Activated CD4-positive, alpha-beta memory T cell treated with anti-CD3 and anti-CD28 coated beads for 36 hours (primary cell): ENCODE measurements at regions of chr15 and their contacts with region 1.

Region 1: GRCh38 chr15:40807028-40807887 is at the starts of genes DNAJC17 and ZFYVE19:
- DNase-seq: peak; percentile 97
- H3K4me3 Mint-ChIP-seq: peak within 1 kb of the TSS; percentile 97
- H3K27ac Mint-ChIP-seq: peak within 1 kb of the TSS; percentile 98
- H3K4me1 Mint-ChIP-seq: peaks cover 21% of the 10 kb centered on the region
- H3K27me3 Mint-ChIP-seq: no peaks in the 10 kb centered on the region
- total RNA-seq, gene DNAJC17: 32.5 to 34.5 TPM
- total RNA-seq, gene ZFYVE19: 22.8 to 26.1 TPM

Region 2: DNA sequence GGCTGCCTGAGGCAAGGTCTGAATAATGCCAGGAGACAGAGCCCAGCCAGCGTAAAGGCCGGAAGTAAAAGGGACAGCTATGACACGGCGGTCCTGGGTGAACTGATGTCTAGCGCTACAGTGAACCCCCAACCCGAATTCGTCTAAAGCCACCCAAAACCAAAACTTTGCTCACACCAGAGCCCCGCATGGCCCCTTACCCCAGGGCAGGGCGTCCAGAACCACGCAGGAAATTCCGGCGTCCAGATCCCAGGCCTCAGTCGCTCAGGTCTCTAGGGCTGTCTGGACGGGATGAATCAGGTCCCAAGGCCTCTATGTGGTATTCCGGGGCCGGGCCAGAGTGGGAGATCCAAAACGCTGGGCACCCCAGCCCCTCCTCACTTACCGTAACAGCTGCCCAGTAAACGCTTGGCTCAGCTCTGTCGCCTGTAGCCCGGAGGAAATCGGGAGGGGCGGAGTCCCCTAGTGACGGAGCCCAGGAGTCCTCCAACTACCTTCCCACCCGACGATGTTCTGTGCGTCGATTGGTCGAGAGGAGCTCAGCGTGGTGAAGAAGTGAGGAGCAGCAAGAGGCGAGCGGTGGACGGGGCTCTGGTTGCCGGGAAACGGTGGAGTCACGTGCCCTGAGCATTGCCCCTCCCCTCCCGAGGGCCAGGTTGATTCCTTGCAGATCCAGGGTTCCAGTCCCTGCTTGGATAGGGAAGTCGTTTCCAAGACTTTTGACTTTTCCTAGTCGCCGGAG is 242.5 kb before region 1 on chr15 and contains the start of gene CCDC32:
- CTCF ChIA-PET with region 1: no interaction called
- POLR2A ChIA-PET with region 1: no interaction called
- intact Hi-C with region 1: loop called (anchors 1 kb)
- DNase-seq: peak; percentile 98
- H3K4me3 Mint-ChIP-seq: peak within 1 kb of the TSS; percentile 96
- H3K27ac Mint-ChIP-seq: peak within 1 kb of the TSS; percentile 92
- H3K4me1 Mint-ChIP-seq: peaks cover 48% of the 10 kb centered on the region
- H3K27me3 Mint-ChIP-seq: peaks cover 2% of the 10 kb centered on the region
- total RNA-seq, gene CCDC32: 28.6 to 29.2 TPM

Region 3: GRCh38 chr15:40743921-40744814 is 63.1 kb before region 1 on chr15:
- CTCF ChIA-PET with region 1: interaction called, 3 read pairs
- POLR2A ChIA-PET with region 1: interaction called, 5 read pairs
- intact Hi-C with region 1: loop called (anchors 2 kb)
- DNase-seq: peak; percentile 86
- H3K4me3 Mint-ChIP-seq: peak overlapping the region; percentile 49
- H3K27ac Mint-ChIP-seq: peak overlapping the region; percentile 89
- H3K4me1 Mint-ChIP-seq: peaks cover 29% of the 10 kb centered on the region
- H3K27me3 Mint-ChIP-seq: no peaks in the 10 kb centered on the region

Region 4: GRCh38 chr15:40782580-40783227 is 24.6 kb before region 1 on chr15:
- CTCF ChIA-PET with region 1: interaction called, 10 read pairs
- POLR2A ChIA-PET with region 1: no interaction called
- intact Hi-C with region 1: no loop called
- DNase-seq: peak; percentile 87
- H3K4me3 Mint-ChIP-seq: no peak overlapping the region
- H3K27ac Mint-ChIP-seq: no peak overlapping the region
- H3K4me1 Mint-ChIP-seq: peaks cover 22% of the 10 kb centered on the region
- H3K27me3 Mint-ChIP-seq: no peaks in the 10 kb centered on the region

Region 5: GRCh38 chr15:40825661-40826088 is 18.4 kb after region 1 on chr15:
- CTCF ChIA-PET with region 1: no interaction called
- POLR2A ChIA-PET with region 1: no interaction called
- intact Hi-C with region 1: no loop called
- DNase-seq: no peak
- H3K4me3 Mint-ChIP-seq: no peak overlapping the region
- H3K27ac Mint-ChIP-seq: no peak overlapping the region
- H3K4me1 Mint-ChIP-seq: no peaks in the 10 kb centered on the region
- H3K27me3 Mint-ChIP-seq: peaks cover 4% of the 10 kb centered on the region

Region 6: GRCh38 chr15:40857601-40858341 is 50.5 kb after region 1 on chr15:
- CTCF ChIA-PET with region 1: interaction called, 21 read pairs
- POLR2A ChIA-PET with region 1: no interaction called
- intact Hi-C with region 1: no loop called
- DNase-seq: peak; percentile 88
- H3K4me3 Mint-ChIP-seq: no peak overlapping the region
- H3K27ac Mint-ChIP-seq: no peak overlapping the region
- H3K4me1 Mint-ChIP-seq: peaks cover 5% of the 10 kb centered on the region
- H3K27me3 Mint-ChIP-seq: no peaks in the 10 kb centered on the region

Region 7: DNA sequence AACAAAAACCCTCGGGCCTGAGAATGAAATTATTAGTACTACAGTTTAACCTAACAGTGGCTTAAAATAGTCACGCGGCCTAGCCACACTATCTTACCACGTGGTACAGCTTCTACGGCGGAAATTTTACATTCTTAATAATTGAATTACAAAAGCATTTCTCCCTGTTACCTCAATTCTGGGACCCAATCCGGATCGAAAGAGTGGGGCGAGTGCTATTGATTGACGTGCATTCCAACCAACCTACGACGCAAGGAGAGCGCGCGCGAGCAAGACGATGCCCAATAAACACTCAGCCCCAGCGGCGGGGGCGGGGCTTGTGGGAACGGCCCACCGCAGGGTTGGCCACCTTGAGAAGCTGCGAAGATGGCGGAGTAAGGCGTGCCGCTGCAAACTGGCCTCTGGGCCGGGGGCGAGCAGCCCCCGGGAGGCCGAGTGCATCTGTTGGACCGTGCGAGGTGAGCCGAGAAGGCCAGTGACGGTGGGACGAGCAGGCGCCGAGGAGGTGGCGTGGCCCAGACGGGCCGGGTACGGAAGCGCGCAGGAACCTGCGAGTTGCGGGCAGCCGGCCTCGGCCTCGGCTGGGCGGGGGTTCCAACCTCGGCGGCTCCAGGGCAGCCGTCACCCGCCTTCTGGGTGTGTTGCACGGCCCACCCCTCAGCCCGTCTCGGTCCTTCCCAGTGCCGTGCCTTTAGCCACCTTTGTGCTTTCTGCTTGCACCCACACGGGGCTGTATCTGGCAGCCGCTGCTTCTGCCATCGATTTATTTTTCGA is 476.6 kb after region 1 on chr15:
- CTCF ChIA-PET with region 1: no interaction called
- POLR2A ChIA-PET with region 1: no interaction called
- intact Hi-C with region 1: loop called (anchors 1 kb)
- DNase-seq: peak; percentile 98
- H3K4me3 Mint-ChIP-seq: peak overlapping the region; percentile 98
- H3K27ac Mint-ChIP-seq: peak overlapping the region; percentile 92
- H3K4me1 Mint-ChIP-seq: peaks cover 51% of the 10 kb centered on the region
- H3K27me3 Mint-ChIP-seq: peaks cover 2% of the 10 kb centered on the region